ENCODE measurements at regions of chr20 and their contacts with region 1.

Region 1: DNA sequence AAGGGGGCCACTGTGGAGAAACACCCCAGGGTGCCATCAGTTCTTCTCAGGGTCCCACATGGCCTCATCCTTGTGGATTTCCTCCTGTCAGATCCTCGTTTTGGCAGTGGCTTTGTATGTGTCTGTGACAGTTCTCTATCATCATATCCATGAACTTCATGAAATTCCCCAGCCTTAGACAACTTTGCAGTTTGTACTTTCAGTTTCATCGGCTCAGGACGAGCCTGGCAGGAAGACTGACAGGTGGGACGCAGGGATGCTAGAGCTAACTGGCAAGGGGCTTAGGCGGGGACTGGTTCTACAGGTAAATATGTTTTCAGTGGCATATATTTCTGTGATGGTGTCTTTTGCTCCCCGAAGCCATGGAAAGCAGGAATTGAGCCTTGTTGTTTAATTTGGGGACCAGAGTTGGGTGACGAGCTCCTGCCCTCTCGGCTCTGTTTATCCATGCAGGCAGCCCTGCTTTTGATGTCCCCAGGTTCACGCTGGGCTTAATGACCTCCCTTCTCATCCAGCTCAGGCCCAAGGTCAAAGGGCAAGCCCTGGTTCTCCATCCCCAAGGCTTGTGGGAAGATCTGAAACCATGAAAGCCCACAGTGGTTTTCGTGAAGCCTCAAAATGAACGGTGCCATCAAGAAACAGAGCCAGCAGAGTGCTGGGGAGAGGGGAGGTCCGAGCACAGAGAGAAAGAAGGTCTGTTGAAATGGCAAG is 11.2 kb downstream of the SDCBP2 start:
- DNase-seq: no peak
- H3K4me3 ChIP-seq: no peak overlapping the region
- H3K27ac ChIP-seq: no peak overlapping the region
- H3K4me1 ChIP-seq: peaks cover 18% of the 10 kb centered on the region
- H3K27me3 ChIP-seq: no peaks in the 10 kb centered on the region

Region 2: DNA sequence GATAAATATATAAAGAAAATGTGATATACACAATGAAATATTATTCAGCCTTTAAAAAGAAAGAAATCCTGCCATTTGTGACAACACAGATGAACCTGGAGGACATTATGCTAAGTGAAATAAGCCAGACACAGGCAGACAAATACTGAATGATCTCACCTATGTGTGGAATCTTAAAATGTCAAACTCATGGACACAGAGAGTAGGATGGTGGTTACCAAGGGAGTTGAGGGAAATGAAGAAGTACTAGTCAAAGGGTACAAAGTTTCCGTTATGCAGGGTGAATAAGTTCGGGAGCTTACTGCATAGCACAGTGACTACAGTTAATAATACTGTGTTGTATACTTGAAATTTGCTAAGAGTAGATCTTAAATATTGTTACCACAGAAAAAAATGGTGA is 1074.8 kb before region 1 on chr20:
- in situ Hi-C with region 1: no loop called
- DNase-seq: no peak
- H3K4me3 ChIP-seq: no peak overlapping the region
- H3K27ac ChIP-seq: no peak overlapping the region
- H3K4me1 ChIP-seq: no peaks in the 10 kb centered on the region
- H3K27me3 ChIP-seq: peaks cover 19% of the 10 kb centered on the region

Region 3: DNA sequence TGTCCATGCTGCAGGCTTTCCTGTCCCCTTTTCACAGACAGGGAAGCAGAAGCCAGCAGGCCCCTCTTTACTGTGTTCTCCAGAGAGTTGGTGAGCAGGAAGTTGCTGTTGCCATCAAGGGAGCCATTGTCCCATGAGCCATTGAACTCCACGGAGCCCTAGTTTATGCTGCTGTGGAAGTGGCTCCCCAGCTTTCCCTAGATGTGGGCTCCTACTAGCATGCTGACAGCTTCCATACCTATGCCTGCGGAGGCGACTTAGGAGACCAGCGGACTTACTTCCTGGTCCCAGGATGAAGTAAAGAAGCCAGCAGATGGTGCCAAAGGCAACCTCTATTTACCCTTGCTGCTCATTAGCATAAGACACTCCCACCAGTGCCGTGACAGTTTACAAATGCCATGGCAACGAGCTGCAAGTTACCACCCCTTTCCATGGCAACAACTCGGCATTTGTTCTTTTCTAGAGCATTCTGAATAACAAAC is 106.0 kb after region 1 on chr20:
- in situ Hi-C with region 1: no loop called
- DNase-seq: peak; percentile 78
- H3K4me3 ChIP-seq: no peak overlapping the region
- H3K27ac ChIP-seq: no peak overlapping the region
- H3K4me1 ChIP-seq: peaks cover 4% of the 10 kb centered on the region
- H3K27me3 ChIP-seq: no peaks in the 10 kb centered on the region

Region 4: DNA sequence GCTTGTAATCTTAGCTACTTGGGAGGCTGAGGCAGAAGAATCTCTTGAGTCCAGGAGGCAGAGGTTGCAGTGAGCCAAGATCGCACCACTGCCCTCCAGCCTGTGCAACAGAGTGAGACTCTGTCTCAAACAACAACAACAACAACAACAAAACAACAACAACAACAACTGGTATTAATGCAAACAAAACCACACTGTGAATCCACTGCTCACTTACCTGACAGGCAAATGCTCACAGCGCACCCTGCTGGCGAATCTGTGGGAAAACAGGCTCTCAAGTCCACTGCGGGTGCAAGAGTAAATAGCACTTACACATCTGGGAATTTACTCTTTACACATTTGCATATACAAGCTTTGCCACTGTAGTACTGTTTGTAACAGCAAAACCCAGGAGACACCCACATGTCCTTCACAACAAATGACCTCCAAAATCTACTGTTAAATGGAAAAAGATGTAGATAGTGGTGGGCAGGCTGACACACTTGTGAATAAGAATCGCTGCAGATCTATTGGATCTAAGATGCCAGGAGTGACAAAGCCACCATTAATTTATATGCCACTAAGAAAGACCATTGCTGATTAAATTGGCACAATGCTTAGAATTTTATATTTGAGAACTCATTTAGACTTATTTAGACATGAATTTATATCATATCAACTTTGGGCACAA is 119.7 kb after region 1 on chr20:
- in situ Hi-C with region 1: loop called (anchors 5 kb)
- DNase-seq: peak; percentile 73
- H3K4me3 ChIP-seq: no peak overlapping the region
- H3K27ac ChIP-seq: no peak overlapping the region
- H3K4me1 ChIP-seq: peaks cover 10% of the 10 kb centered on the region
- H3K27me3 ChIP-seq: no peaks in the 10 kb centered on the region